ENCODE measurements at regions of chr12 and their contacts with region 1.

Region 1: DNA sequence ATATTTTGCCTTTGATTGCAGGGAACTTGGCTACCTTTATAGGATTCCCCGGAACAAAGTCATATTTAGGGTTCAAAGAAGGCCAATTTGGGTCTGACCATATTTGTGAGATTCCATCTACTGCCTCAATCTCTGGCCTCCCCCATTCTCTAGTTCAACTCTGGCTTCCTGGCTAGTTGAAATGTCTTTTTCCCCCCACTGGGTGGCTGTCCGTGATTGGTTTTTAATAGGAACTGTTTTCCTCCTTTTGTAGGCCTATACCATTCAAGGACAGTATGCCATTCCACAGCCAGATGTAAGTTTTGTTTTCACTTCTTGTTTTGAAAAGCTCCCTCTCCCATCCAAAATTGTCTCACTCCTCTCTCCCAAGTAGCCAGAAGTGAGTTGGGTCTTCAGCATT is 13.8 kb downstream of the PCBP2 start:
- H3K4me3 ChIP-seq: no peak overlapping the region
- H3K27ac ChIP-seq: no peak overlapping the region; the same call in 1 of the 2 replicates
- H3K4me1 ChIP-seq: no peaks in the 10 kb centered on the region
- CTCF ChIP-seq: no peak

Region 2: DNA sequence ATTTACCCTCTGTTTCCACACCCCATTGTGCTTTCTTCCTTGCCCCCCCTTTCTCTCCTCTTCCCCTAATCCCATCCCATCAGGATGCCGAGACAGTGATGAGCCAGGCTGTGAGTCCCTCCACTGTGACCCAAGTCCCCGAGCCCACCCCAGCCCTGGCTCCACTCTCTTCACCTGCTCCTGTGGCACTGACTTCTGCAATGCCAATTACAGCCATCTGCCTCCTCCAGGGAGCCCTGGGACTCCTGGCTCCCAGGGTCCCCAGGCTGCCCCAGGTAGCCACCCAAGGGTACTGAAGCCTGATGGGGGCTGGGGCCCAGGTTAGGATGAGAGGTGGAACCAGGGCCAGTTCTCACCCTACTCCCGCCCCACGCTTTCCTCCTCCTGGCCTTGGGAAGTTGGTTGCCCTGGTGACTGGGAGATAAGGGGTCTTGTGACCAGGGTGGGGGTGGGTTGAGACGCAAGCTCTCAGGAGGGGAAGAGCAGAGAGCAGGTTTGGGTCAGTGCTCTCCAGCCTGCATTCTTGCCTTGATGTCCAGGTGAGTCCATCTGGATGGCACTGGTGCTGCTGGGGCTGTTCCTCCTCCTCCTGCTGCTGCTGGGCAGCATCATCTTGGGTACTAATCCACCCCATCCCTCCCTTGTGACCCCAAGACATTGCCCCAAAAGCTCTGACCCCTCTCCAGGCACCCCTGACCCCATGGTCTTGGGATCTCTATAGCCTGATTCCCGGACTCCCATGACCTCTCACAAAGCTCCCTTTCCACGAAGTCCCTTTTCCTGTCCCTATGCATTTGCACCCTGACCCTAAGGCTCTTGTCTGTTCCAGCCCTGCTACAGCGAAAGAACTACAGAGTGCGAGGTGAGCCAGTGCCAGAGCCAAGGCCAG is 40.8 kb before region 1 on chr12:
- CTCF ChIA-PET with region 1: no interaction called
- POLR2A ChIA-PET with region 1: no interaction called
- H3K4me3 ChIP-seq: no peak overlapping the region
- H3K27ac ChIP-seq: peak overlapping the region; percentile 4; the same call in 1 of the 2 replicates
- H3K4me1 ChIP-seq: peaks cover 12% of the 10 kb centered on the region
- CTCF ChIP-seq: no peak

Region 3: GRCh38 chr12:53476769-53477209 is 11.1 kb after region 1 on chr12:
- CTCF ChIA-PET with region 1: interaction called, 17 read pairs
- POLR2A ChIA-PET with region 1: interaction called, 7 read pairs
- H3K4me3 ChIP-seq: no peak overlapping the region
- H3K27ac ChIP-seq: no peak overlapping the region
- H3K4me1 ChIP-seq: no peaks in the 10 kb centered on the region
- CTCF ChIP-seq: no peak

Region 4: GRCh38 chr12:53492830-53493611 is 27.3 kb after region 1 on chr12:
- CTCF ChIA-PET with region 1: interaction called, 3 read pairs
- POLR2A ChIA-PET with region 1: interaction called, 11 read pairs
- H3K4me3 ChIP-seq: peak overlapping the region; percentile 55
- H3K27ac ChIP-seq: peak overlapping the region; percentile 46; the same call in 1 of the 2 replicates
- H3K4me1 ChIP-seq: peaks cover 16% of the 10 kb centered on the region
- CTCF ChIP-seq: 0 out of 2 replicates have a peak, but pooled peaks have one; percentile 13

Measured in HEK293 (cell line).